IMR-90 (cell line): ENCODE measurements at regions of chr5 and their contacts with region 1.

Region 1: GRCh38 chr5:114325541-114325940 is 36.3 kb upstream of the KCNN2 start:
- DNase-seq: peak; percentile 94
- ATAC-seq: peak; percentile 37; the same call in 1 of the 2 replicates
- H3K4me3 ChIP-seq: no peak overlapping the region
- H3K27ac ChIP-seq: no peak overlapping the region
- H3K4me1 ChIP-seq: no peaks in the 10 kb centered on the region
- H3K27me3 ChIP-seq: no peaks in the 10 kb centered on the region
- CTCF ChIP-seq: no peak
- POLR2A ChIP-seq: no peak
- RAD21 ChIP-seq: no peak

Region 2: GRCh38 chr5:115686051-115686737 is 1360.7 kb after region 1 on chr5:
- CTCF ChIA-PET with region 1: no interaction called
- POLR2A ChIA-PET with region 1: no interaction called
- dilution Hi-C with region 1: no loop called
- in situ Hi-C with region 1: no loop called
- intact Hi-C with region 1: loop called (anchors 5 kb)
- DNase-seq: no peak
- ATAC-seq: peak; percentile 70
- H3K4me3 ChIP-seq: no peak overlapping the region
- H3K27ac ChIP-seq: no peak overlapping the region
- H3K4me1 ChIP-seq: no peaks in the 10 kb centered on the region
- H3K27me3 ChIP-seq: peaks cover 2% of the 10 kb centered on the region; the same call in 1 of the 2 replicates
- CTCF ChIP-seq: no peak
- POLR2A ChIP-seq: no peak
- RAD21 ChIP-seq: no peak